ENCODE measurements at regions of chr17 and their contacts with region 1.

Region 1: GRCh38 chr17:44708401-44709181 is at the start of gene DBF4B:
- DNase-seq: peak; percentile 69 to 95 (median 82)
- ATAC-seq: peak; percentile 98
- H3K4me3 ChIP-seq: peak within 1 kb of the TSS; percentile 92 to 95
- H3K4me3 Mint-ChIP-seq: no peak within 1 kb of the TSS
- H3K27ac ChIP-seq: peak within 1 kb of the TSS; percentile 51 to 55
- H3K27ac Mint-ChIP-seq: no peak within 1 kb of the TSS
- H3K4me1 ChIP-seq: peaks cover 13% of the 10 kb centered on the region
- H3K4me1 Mint-ChIP-seq: peaks cover 5% of the 10 kb centered on the region
- H3K27me3 ChIP-seq: no peaks in the 10 kb centered on the region
- H3K27me3 Mint-ChIP-seq: peaks cover 6% of the 10 kb centered on the region
- CTCF ChIP-seq: no peak
- total RNA-seq, gene DBF4B: 0.71 to 1.3 TPM

Region 2: GRCh38 chr17:44689477-44690217 is 18.9 kb before region 1 on chr17 and contains the start of gene CCDC43:
- CTCF ChIA-PET with region 1: interaction called, 3 read pairs
- POLR2A ChIA-PET with region 1: interaction called, 25 read pairs
- intact Hi-C with region 1: loop called (anchors 1 kb)
- DNase-seq: peak; percentile 86 to 95 (median 92)
- ATAC-seq: peak; percentile 99
- H3K4me3 ChIP-seq: peak within 1 kb of the TSS; percentile 71 to 86
- H3K4me3 Mint-ChIP-seq: peak within 1 kb of the TSS; percentile 98
- H3K27ac ChIP-seq: peak within 1 kb of the TSS; percentile 81 to 90
- H3K27ac Mint-ChIP-seq: peak within 1 kb of the TSS; percentile 96
- H3K4me1 ChIP-seq: peaks cover 16% of the 10 kb centered on the region
- H3K4me1 Mint-ChIP-seq: peaks cover 38% of the 10 kb centered on the region
- H3K27me3 ChIP-seq: no peaks in the 10 kb centered on the region
- H3K27me3 Mint-ChIP-seq: no peaks in the 10 kb centered on the region
- CTCF ChIP-seq: no peak
- total RNA-seq, gene CCDC43: 39.1 TPM

Region 3: DNA sequence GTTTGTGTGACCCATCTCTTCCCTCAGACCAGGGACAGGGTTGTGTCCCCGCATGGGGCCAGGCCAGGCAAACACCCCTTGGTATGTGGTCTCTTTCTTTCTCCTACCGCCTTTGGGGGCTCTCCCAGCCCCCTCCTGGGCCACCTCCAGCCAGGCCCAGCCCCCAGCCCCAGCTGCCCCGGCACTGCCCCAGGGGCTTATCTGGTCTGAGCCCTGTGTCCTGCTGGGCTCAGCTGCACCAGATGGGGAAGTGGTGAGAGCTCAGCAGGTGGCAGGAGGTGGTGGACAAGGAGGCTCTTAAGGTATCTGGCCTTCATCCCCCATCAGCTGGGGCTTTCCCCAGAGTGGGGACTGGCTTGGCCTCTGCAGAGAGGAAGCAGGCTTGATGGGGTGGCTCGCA is 58.9 kb after region 1 on chr17:
- CTCF ChIA-PET with region 1: no interaction called
- POLR2A ChIA-PET with region 1: no interaction called
- intact Hi-C with region 1: no loop called
- DNase-seq: no peak
- ATAC-seq: no peak
- H3K4me3 ChIP-seq: no peak overlapping the region
- H3K4me3 Mint-ChIP-seq: no peak overlapping the region
- H3K27ac ChIP-seq: no peak overlapping the region
- H3K27ac Mint-ChIP-seq: no peak overlapping the region
- H3K4me1 ChIP-seq: no peaks in the 10 kb centered on the region
- H3K4me1 Mint-ChIP-seq: no peaks in the 10 kb centered on the region
- H3K27me3 ChIP-seq: no peaks in the 10 kb centered on the region
- H3K27me3 Mint-ChIP-seq: peaks cover 33% of the 10 kb centered on the region
- CTCF ChIP-seq: no peak

Measured in CD8-positive, alpha-beta T cell (primary cell).